Ascending aorta (tissue), 2 donors: ENCODE measurements at regions of chr5 and their contacts with region 1.

Region 1: GRCh38 chr5:170633235-170634081 is 129.6 kb downstream of the KCNIP1 start:
- DNase-seq: peak in 1 of 2 donors; percentile 85
- H3K4me3 ChIP-seq: peak overlapping the region; percentile 33 to 53
- H3K27ac ChIP-seq: peak overlapping the region; percentile 73 to 90
- H3K4me1 ChIP-seq: peaks cover 3 to 24% of the 10 kb centered on the region in 2 donors
- H3K27me3 ChIP-seq: no peaks in the 10 kb centered on the region
- CTCF ChIP-seq: no peak

Region 2: GRCh38 chr5:170306381-170306831 is 327.1 kb before region 1 on chr5:
- intact Hi-C with region 1: loop called (anchors 5 kb)
- DNase-seq: peak; percentile 65 to 93
- H3K4me3 ChIP-seq: no peak overlapping the region
- H3K27ac ChIP-seq: peak overlapping the region; percentile 52 to 68
- H3K4me1 ChIP-seq: peaks cover 7 to 23% of the 10 kb centered on the region in 2 donors
- H3K27me3 ChIP-seq: no peaks in the 10 kb centered on the region
- CTCF ChIP-seq: no peak

Region 3: GRCh38 chr5:170333161-170333910 is 300.1 kb before region 1 on chr5:
- intact Hi-C with region 1: loop called (anchors 5 kb)
- DNase-seq: peak in 1 of 2 donors; percentile 37
- H3K4me3 ChIP-seq: no peak overlapping the region
- H3K27ac ChIP-seq: no peak overlapping the region
- H3K4me1 ChIP-seq: peaks cover 0 to 14% of the 10 kb centered on the region in 2 donors
- H3K27me3 ChIP-seq: no peaks in the 10 kb centered on the region
- CTCF ChIP-seq: no peak

Region 4: GRCh38 chr5:170434966-170435605 is 198.4 kb before region 1 on chr5:
- intact Hi-C with region 1: loop called (anchors 1 kb)
- DNase-seq: peak in 1 of 2 donors; percentile 77
- H3K4me3 ChIP-seq: no peak overlapping the region
- H3K27ac ChIP-seq: no peak overlapping the region
- H3K4me1 ChIP-seq: no peaks in the 10 kb centered on the region
- H3K27me3 ChIP-seq: no peaks in the 10 kb centered on the region
- CTCF ChIP-seq: peak; percentile 83 to 96 (median 92)

Region 5: GRCh38 chr5:170603578-170604565 is 29.6 kb before region 1 on chr5:
- intact Hi-C with region 1: loop called (anchors 1 kb)
- DNase-seq: no peak
- H3K4me3 ChIP-seq: no peak overlapping the region
- H3K27ac ChIP-seq: no peak overlapping the region
- H3K4me1 ChIP-seq: no peaks in the 10 kb centered on the region
- H3K27me3 ChIP-seq: no peaks in the 10 kb centered on the region
- CTCF ChIP-seq: peak; percentile 59 to 77 (median 63)

Region 6: DNA sequence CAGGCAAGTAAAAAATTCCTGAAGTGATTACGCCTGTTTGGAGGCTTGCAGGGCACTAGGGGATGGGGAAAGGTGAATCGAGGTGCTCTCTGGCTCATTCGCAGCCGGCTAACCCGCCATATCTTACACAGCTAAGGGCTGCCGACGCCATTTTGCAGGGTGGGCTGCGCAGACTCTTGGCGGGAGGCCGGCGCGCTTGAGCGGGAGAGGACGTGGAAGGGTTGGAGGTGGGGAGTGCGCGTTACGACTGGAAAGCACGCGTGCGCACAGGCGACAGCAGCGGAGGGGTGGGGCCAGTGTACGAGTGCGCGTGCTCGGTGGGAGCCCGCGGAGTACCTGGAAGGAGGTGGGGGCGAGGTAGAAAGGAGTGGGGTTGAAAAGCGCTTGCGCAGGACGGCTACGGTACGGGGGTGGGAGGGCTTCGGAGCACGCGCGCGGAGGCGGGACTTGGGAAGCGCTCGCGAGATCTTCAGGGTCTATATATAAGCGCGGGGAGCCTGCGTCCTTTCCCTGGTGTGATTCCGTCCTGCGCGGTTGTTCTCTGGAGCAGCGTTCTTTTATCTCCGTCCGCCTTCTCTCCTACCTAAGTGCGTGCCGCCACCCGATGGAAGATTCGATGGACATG is 754.0 kb after region 1 on chr5 and contains the start of gene NPM1:
- intact Hi-C with region 1: loop called (anchors 5 kb)
- DNase-seq: peak; percentile 78 to 97
- H3K4me3 ChIP-seq: peak within 1 kb of the TSS; percentile 68 to 94
- H3K27ac ChIP-seq: peak within 1 kb of the TSS; percentile 87 to 88
- H3K4me1 ChIP-seq: peaks cover 0 to 18% of the 10 kb centered on the region in 2 donors
- H3K27me3 ChIP-seq: no peaks in the 10 kb centered on the region
- CTCF ChIP-seq: no peak
- total RNA-seq, gene NPM1: 269 TPM